Natural killer cell (primary cell): ENCODE measurements at regions of chr21 and their contacts with region 1.

Region 1: DNA sequence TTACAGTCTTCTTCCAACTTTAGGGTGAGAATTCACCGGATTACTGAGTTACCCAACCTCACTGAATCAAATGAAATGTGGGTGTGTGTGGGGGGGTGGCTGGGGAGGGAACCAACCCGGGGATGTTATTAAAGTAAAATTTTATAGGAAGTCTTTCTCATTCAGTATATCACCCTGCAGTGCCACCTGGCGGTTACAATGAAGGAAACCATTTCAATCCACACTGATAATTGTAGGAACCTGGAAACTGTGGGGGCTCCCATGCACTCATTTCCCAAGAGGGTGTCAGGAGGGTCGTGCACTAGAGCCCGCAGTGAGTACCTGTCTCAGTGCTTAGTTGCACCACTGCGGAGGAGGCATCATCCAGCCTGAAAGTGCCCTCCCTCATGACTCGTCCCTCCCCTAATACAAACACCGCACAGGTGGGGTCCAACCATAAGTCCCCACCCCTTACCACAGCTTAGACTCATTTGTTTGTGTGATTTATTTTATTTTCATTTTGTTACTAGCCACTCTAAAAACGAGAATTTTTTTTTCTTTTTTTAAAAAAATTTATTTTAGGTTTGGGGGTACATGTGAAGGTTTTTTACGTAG is 29.1 kb upstream of the IGSF5 start:
- DNase-seq: peak; percentile 16 to 53
- ATAC-seq: no peak
- H3K4me3 ChIP-seq: no peak overlapping the region
- H3K4me3 Mint-ChIP-seq: no peak overlapping the region
- H3K27ac ChIP-seq: no peak overlapping the region
- H3K27ac Mint-ChIP-seq: no peak overlapping the region
- H3K4me1 ChIP-seq: no peaks in the 10 kb centered on the region
- H3K4me1 Mint-ChIP-seq: no peaks in the 10 kb centered on the region
- H3K27me3 ChIP-seq: no peaks in the 10 kb centered on the region
- H3K27me3 Mint-ChIP-seq: no peaks in the 10 kb centered on the region
- CTCF ChIP-seq: peak; percentile 55

Region 2: GRCh38 chr21:39518138-39518846 is 197.6 kb before region 1 on chr21:
- intact Hi-C with region 1: loop called (anchors 1 kb)
- DNase-seq: peak in 1 of 2 donors; percentile 71
- ATAC-seq: peak; percentile 64 to 90 (median 71)
- H3K4me3 ChIP-seq: no peak overlapping the region
- H3K4me3 Mint-ChIP-seq: no peak overlapping the region
- H3K27ac ChIP-seq: no peak overlapping the region
- H3K27ac Mint-ChIP-seq: no peak overlapping the region
- H3K4me1 ChIP-seq: peaks cover 4% of the 10 kb centered on the region
- H3K4me1 Mint-ChIP-seq: peaks cover 0 to 6% of the 10 kb centered on the region in 2 donors
- H3K27me3 ChIP-seq: no peaks in the 10 kb centered on the region
- H3K27me3 Mint-ChIP-seq: peaks cover 5 to 21% of the 10 kb centered on the region in 2 donors
- CTCF ChIP-seq: peak; percentile 92